ENCODE measurements at regions of chr18 and their contacts with region 1.

Region 1: DNA sequence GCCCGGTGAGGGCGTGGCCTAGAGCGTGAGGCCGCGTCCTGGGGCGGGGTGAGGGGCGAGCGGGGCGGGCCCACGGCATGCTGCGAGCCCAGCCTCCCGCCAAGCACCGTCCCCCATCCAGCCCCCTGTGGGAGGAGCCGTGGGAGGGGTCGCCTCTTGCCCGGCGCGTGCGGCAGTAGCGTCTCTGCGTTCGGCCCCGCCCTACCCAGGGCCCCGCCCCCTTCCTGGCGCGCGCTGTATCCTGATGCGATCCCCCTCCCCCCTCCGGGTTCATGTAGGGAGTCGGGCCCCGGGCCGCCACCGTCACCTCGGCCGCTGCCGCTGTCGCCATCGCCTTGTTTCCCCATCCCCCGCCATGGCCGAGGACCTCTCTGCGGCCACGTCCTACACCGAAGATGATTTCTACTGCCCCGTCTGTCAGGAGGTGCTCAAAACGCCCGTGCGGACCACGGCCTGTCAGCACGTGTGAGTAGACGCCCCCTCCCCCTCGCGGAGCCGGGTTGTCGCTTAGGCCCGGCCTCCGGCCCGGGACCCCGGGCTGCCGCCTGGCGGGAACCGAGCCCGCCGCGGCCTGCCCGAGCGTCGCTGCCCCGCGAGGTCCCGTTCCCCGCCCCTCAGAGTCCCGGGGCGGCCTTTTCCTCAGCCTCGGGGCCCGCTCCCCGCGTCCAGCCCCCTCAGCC is 888 bp downstream of the RNF138 start:
- DNase-seq: peak; percentile 97 to 100 (median 100)

Region 2: GRCh38 chr18:31942999-31943865 is 149.3 kb before region 1 on chr18 and contains the start of gene TRAPPC8:
- intact Hi-C with region 1: loop called (anchors 2 kb)
- DNase-seq: peak; percentile 97 to 100 (median 99)

Region 3: GRCh38 chr18:32301976-32302743 is 209.6 kb after region 1 on chr18:
- intact Hi-C with region 1: no loop called
- DNase-seq: no peak

Measured in posterior cingulate gyrus (tissue), 11 donors.